ENCODE measurements at regions of chr9 and their contacts with region 1.

Region 1: DNA sequence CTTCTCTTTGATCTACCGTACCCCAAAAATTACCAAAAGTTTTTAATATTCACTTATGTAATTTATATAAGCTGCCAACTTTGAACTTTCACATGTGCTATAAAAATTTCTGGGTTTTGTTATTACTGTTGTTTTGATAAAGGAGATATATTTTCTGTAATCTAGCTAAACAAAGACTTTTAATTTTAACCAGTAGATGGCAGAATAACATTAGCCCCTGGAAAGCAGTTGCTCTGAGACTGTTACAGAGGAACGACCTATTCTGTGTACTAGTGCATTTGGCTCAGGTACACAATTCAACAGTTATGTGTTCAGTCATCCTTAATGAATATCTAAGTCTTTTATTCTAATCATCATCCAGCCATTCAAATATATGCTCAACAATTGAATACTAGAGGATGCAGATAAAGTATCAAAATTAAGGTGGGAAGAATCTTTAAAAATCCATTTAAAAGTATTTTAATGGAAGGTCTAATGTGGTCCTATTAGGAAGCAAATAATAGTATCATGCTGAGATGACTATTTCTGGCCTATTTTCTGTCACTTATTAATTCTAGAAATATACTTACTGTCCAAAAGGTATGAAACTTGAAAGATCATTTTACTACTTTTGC is 8.6 kb downstream of the KLHL9 start:
- DNase-seq: no peak
- ATAC-seq: peak; percentile 80
- H3K4me3 ChIP-seq: no peak overlapping the region
- H3K27ac ChIP-seq: no peak overlapping the region
- H3K4me1 ChIP-seq: no peaks in the 10 kb centered on the region
- H3K27me3 ChIP-seq: no peaks in the 10 kb centered on the region
- CTCF ChIP-seq: peak; percentile 51 to 81 (median 69); a peak in 5 of 6 replicates
- POLR2A ChIP-seq: no peak
- RAD21 ChIP-seq: peak; percentile 79

Region 2: GRCh38 chr9:21357479-21358460 is 31.1 kb after region 1 on chr9:
- CTCF ChIA-PET with region 1: no interaction called
- POLR2A ChIA-PET with region 1: no interaction called
- RAD21 ChIA-PET with region 1: no interaction called
- intact Hi-C with region 1: no loop called
- DNase-seq: no peak
- ATAC-seq: no peak
- H3K4me3 ChIP-seq: no peak overlapping the region
- H3K27ac ChIP-seq: no peak overlapping the region
- H3K4me1 ChIP-seq: no peaks in the 10 kb centered on the region
- H3K27me3 ChIP-seq: no peaks in the 10 kb centered on the region
- CTCF ChIP-seq: no peak
- POLR2A ChIP-seq: no peak
- RAD21 ChIP-seq: no peak

Region 3: DNA sequence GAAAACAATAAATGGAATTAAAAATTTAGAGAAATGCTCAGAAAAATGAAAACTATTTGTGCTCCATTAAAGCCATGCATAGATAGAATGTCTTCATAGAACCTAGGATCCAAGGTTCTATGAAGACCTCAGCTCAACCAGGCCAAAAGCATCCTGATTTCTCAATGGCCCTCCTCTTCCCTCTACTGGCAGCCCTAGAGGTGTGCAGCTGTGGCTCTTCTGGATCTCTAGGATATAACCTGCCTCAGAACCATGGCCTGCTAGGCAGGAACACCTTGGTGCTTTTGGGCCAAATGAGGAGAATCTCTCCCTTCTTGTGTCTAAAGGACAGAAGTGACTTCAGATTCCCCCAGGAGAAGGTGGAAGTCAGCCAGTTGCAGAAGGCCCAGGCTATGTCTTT is 128.7 kb after region 1 on chr9:
- CTCF ChIA-PET with region 1: interaction called, 46 read pairs
- POLR2A ChIA-PET with region 1: interaction called, 4 read pairs
- RAD21 ChIA-PET with region 1: interaction called, 3 to 4 read pairs
- intact Hi-C with region 1: loop called (anchors 2 kb)
- DNase-seq: peak; percentile 23
- ATAC-seq: peak; percentile 99
- H3K4me3 ChIP-seq: no peak overlapping the region
- H3K27ac ChIP-seq: no peak overlapping the region
- H3K4me1 ChIP-seq: no peaks in the 10 kb centered on the region
- H3K27me3 ChIP-seq: no peaks in the 10 kb centered on the region
- CTCF ChIP-seq: peak; percentile 69 to 84 (median 77); a peak in 5 of 6 replicates
- POLR2A ChIP-seq: no peak
- RAD21 ChIP-seq: peak; percentile 81

Region 4: GRCh38 chr9:21506626-21507484 is 180.2 kb after region 1 on chr9:
- CTCF ChIA-PET with region 1: no interaction called
- POLR2A ChIA-PET with region 1: no interaction called
- RAD21 ChIA-PET with region 1: no interaction called
- intact Hi-C with region 1: loop called (anchors 2 kb)
- DNase-seq: no peak
- ATAC-seq: no peak
- H3K4me3 ChIP-seq: no peak overlapping the region
- H3K27ac ChIP-seq: peak overlapping the region; percentile 32; the same call in 1 of the 2 replicates
- H3K4me1 ChIP-seq: peaks cover 44 to 71% of the 10 kb centered on the region in 2 experiments
- H3K27me3 ChIP-seq: no peaks in the 10 kb centered on the region
- CTCF ChIP-seq: no peak
- POLR2A ChIP-seq: no peak
- RAD21 ChIP-seq: no peak

Region 5: DNA sequence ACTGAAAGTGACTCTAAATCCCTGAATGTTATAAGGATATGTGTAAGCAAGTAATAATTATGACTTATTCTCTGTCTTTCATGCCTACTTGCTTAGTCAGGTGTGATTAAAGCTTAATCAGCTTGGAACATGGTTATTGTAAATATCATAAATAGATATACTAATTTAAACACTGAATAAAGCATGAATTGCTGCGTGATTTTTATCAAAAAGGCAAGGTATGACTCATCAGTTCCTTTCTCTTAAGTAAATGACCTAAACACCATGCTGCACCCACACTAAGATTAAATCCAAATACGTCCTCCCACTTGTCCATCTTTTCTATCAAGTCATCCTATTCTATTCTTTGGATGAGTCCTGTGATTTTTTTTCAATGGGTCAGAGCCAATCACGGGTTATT is 351.2 kb after region 1 on chr9:
- CTCF ChIA-PET with region 1: no interaction called
- POLR2A ChIA-PET with region 1: no interaction called
- RAD21 ChIA-PET with region 1: no interaction called
- intact Hi-C with region 1: no loop called
- DNase-seq: peak; percentile 99
- ATAC-seq: peak; percentile 76
- H3K4me3 ChIP-seq: no peak overlapping the region
- H3K27ac ChIP-seq: peak overlapping the region; percentile 99
- H3K4me1 ChIP-seq: peaks cover 90 to 99% of the 10 kb centered on the region in 2 experiments
- H3K27me3 ChIP-seq: no peaks in the 10 kb centered on the region
- CTCF ChIP-seq: 0 out of 6 replicates have a peak, but pooled peaks of 1 of the 3 experiments have one; percentile 4
- POLR2A ChIP-seq: no peak
- RAD21 ChIP-seq: peak; percentile 48